ENCODE measurements at regions of chr3 and their contacts with region 1.

Region 1: DNA sequence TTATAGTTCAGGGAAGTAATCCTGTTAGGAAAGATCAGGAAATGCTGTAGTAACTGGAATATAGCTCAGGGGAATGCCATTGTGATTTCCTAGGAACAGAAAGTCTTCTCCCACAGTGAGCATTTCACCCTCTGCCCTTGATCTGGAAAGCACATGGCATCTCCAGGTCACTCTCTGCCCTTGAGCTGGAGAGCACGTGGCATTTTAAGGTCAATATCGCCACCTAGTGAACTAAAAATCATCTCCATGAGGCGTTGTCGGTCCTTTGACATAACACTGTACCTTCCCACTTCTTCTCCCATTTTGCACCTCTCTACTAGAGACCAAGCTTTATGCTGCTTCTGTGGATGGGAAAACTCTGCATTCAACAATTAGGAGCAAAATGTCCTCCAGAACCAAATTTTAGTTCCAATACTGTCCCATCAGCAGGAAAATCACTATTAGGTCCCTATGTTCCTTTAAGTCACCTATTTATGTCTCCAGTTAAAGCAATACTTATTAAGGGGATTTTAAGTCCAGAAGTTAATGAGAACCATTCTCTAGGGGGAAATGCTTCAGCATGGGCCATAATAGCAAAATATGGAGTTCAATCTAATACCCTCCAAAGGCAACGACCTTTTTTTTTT is 54.7 kb upstream of the GK5 start:
- DNase-seq: peak; percentile 40 to 64
- H3K4me3 ChIP-seq: no peak overlapping the region
- H3K27ac ChIP-seq: no peak overlapping the region
- H3K4me1 ChIP-seq: peaks cover 20% of the 10 kb centered on the region
- H3K27me3 ChIP-seq: no peaks in the 10 kb centered on the region
- CTCF ChIP-seq: peak; percentile 83

Region 2: DNA sequence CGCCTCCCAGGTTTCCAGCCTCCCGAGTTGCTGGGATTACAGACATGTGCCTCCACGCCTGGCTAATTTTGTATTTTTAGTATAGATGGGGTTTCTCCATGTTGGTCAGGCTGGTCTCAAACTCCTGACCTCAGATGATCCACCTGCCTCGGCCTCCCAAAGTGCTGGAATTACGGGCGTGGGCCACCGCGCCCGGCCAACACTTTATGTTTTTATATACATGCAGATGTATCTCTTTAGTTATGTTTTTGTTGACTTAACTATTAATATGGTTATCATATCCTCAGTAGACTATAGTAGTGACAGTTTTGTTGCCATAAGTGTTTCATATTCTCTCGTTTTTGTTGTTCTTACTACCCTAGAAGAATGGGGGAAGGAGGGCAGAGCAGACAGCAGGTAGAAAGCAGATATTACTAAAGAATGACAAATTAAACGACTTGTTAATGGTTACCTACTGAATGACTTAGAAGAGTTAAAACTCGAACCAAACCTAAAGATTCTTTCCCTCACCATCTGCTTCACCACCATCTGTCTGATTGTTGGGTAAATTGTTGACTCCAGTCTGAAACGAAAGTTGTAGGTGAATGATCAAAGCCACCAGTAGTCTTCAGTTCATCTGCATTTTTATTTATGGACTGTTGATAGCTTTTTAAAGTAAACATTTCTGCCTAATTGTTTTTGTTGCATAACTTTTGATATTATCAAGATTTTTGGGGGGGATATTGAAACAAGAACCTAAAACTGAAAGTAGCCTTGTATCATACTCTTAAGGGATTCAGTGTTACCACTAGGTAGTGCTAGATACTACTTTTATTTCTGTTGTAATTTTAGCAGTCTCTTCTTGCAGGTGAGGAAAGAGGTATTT is 704.0 kb before region 1 on chr3:
- CTCF ChIA-PET with region 1: no interaction called
- POLR2A ChIA-PET with region 1: no interaction called
- intact Hi-C with region 1: loop called (anchors 10 kb)
- DNase-seq: no peak
- H3K4me3 ChIP-seq: no peak overlapping the region
- H3K27ac ChIP-seq: no peak overlapping the region
- H3K4me1 ChIP-seq: no peaks in the 10 kb centered on the region
- H3K27me3 ChIP-seq: no peaks in the 10 kb centered on the region
- CTCF ChIP-seq: peak; percentile 58

Region 3: DNA sequence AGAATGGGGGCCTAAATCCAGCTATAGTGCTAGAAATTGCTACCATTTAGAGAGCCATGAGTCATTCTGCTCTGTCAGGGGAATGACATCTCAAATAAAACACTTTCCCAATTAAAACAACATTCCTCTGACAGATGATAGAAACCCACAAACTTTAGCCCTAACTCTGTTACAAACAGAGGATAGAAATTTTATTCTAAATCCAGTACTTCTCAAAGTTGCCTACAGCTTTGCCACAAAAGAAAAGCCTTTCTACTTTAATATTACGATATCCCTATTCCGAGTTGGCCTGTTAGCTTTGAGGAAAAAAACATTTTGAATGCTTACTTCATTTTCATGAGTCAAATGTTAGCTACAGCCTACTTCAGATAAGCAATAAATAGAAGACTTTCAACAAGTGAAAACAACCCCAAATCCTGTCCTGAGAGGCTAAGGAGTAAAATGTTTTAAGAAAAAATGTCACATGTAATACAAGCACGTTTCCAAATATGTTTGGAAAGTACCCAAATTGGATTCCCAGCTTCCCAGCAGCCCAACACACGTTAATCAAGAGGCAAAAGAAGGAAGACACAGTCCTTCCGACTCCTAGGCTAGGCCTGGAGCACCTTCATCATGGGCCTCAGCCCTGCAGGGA is 320.0 kb before region 1 on chr3:
- CTCF ChIA-PET with region 1: no interaction called
- POLR2A ChIA-PET with region 1: no interaction called
- intact Hi-C with region 1: loop called (anchors 1 kb)
- DNase-seq: peak in 1 of 2 experiments; percentile 78
- H3K4me3 ChIP-seq: no peak overlapping the region
- H3K27ac ChIP-seq: peak overlapping the region; percentile 78
- H3K4me1 ChIP-seq: peaks cover 27% of the 10 kb centered on the region
- H3K27me3 ChIP-seq: no peaks in the 10 kb centered on the region
- CTCF ChIP-seq: no peak

Region 4: GRCh38 chr3:142180761-142181362 is 99.2 kb before region 1 on chr3:
- CTCF ChIA-PET with region 1: interaction called, 3 read pairs
- POLR2A ChIA-PET with region 1: no interaction called
- intact Hi-C with region 1: loop called (anchors 1 kb)
- DNase-seq: peak in 1 of 2 experiments; percentile 13
- H3K4me3 ChIP-seq: no peak overlapping the region
- H3K27ac ChIP-seq: no peak overlapping the region
- H3K4me1 ChIP-seq: no peaks in the 10 kb centered on the region
- H3K27me3 ChIP-seq: no peaks in the 10 kb centered on the region
- CTCF ChIP-seq: peak; percentile 58; the same call in 1 of the 2 replicates

Region 5: GRCh38 chr3:142251951-142252350 is 28.1 kb before region 1 on chr3:
- CTCF ChIA-PET with region 1: no interaction called
- POLR2A ChIA-PET with region 1: no interaction called
- intact Hi-C with region 1: no loop called
- DNase-seq: no peak
- H3K4me3 ChIP-seq: no peak overlapping the region
- H3K27ac ChIP-seq: no peak overlapping the region
- H3K4me1 ChIP-seq: no peaks in the 10 kb centered on the region
- H3K27me3 ChIP-seq: no peaks in the 10 kb centered on the region
- CTCF ChIP-seq: no peak

Region 6: GRCh38 chr3:143348486-143349327 is 1068.6 kb after region 1 on chr3:
- CTCF ChIA-PET with region 1: no interaction called
- POLR2A ChIA-PET with region 1: no interaction called
- intact Hi-C with region 1: no loop called
- DNase-seq: no peak
- H3K4me3 ChIP-seq: no peak overlapping the region
- H3K27ac ChIP-seq: no peak overlapping the region
- H3K4me1 ChIP-seq: no peaks in the 10 kb centered on the region
- H3K27me3 ChIP-seq: no peaks in the 10 kb centered on the region
- CTCF ChIP-seq: no peak

Measured in PC-9 (cell line).